PC-9 (cell line): ENCODE measurements at regions of chr12 and their contacts with region 1.

Region 1: DNA sequence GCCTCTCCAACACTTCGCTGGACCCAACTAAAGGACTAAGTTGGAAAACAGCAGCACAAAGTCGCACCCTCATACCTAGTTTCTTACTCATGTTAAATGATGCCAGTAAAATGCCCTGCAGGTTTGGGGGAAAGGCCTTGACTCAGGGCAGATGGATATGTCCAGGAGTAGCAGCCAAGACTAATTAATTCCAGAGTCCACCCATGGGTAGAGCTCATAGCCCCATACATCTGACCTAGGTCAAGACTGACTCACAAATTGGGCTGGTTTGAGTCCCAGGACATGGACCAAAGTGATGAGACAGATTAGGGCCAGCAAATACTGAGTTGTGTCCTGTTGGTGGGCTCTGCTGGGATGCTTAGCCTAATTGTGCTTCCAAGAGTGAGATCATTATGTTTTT is 224.0 kb upstream of the BTG1 start:
- DNase-seq: peak; percentile 60 to 94
- H3K4me3 ChIP-seq: peak overlapping the region; percentile 35; the same call in 1 of the 2 replicates
- H3K27ac ChIP-seq: peak overlapping the region; percentile 96
- H3K4me1 ChIP-seq: peaks cover 39% of the 10 kb centered on the region
- H3K27me3 ChIP-seq: no peaks in the 10 kb centered on the region
- CTCF ChIP-seq: no peak

Region 2: DNA sequence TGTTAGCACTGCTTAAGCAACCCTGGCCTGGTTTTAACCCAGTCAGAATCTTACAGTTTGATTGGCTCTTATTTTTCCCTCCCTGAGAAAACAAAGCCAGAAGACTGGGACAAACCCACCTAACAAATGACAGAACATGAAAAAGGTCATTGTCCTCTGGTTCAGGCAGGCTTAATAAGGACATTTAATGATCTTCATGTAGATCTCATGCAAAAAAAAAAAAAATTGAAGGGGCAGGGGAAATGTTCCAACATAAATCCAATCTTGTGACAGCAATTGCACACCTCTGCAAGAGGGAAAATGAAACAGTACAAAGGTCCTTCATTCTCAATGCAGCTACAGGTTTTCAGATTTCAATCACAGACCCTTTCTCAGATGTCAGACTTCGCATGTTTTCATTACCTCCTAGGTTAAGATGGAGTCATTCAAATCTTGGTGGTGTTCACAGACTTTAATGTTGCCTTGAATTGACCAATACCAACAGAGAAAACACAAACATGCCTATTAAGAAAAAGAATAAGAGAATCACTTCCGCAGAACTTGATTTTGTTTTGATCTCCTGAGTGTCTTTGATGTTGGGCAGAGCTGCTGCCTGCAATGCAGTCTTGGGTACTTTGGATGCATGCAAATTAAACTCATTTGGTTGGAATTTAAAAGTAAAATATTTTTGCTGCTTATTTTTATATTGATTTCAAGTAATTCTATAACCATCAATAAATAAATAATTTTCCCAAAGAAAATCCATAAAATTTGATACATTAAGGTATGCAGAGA is 583.0 kb before region 1 on chr12:
- CTCF ChIA-PET with region 1: interaction called, 21 read pairs
- POLR2A ChIA-PET with region 1: no interaction called
- intact Hi-C with region 1: no loop called
- DNase-seq: no peak
- H3K4me3 ChIP-seq: no peak overlapping the region
- H3K27ac ChIP-seq: no peak overlapping the region
- H3K4me1 ChIP-seq: no peaks in the 10 kb centered on the region
- H3K27me3 ChIP-seq: no peaks in the 10 kb centered on the region
- CTCF ChIP-seq: no peak

Region 3: DNA sequence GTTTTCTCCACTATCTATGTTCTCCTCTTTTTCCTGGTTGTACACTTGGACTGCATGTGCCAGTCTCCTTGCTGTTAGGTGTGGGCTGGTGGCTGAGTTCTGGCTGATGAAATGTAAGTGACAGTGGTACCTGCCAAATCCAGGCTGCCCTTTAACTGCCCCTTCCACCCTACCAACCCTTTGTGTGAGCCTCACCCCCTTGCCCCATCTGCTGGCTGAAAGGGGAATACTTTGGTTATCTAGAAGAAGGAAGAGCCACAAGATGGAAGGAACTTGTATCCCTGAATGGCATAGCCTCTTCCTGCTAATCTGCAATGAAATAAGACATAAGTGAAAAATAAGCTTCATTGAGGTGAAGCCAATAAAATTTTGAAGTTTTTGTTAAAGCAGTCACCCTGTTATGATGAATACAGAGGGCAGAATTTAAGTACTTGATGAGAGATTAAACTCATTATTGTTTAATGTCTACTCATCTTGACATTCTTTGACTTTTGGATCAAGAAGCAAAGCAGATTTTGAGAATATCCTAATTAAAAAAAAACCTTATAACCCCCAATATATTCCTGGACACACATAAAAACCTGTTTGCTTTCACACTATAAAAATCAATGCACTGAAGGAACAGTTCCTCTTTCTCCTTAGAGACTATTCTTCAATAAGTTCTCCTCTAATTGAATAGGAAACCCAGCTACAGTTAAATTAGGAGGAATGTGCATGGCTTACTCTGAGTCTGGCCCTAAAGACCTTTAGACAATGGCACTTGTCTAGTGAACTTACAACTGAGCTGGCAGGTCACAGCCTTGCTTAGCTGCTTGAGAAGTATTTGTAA is 38.6 kb after region 1 on chr12:
- CTCF ChIA-PET with region 1: no interaction called
- POLR2A ChIA-PET with region 1: no interaction called
- intact Hi-C with region 1: no loop called
- DNase-seq: peak; percentile 38 to 39
- H3K4me3 ChIP-seq: no peak overlapping the region
- H3K27ac ChIP-seq: no peak overlapping the region
- H3K4me1 ChIP-seq: no peaks in the 10 kb centered on the region
- H3K27me3 ChIP-seq: no peaks in the 10 kb centered on the region
- CTCF ChIP-seq: peak; percentile 67